Pancreas (tissue), 10 donors: ENCODE measurements at regions of chr9 and their contacts with region 1.

Region 1: DNA sequence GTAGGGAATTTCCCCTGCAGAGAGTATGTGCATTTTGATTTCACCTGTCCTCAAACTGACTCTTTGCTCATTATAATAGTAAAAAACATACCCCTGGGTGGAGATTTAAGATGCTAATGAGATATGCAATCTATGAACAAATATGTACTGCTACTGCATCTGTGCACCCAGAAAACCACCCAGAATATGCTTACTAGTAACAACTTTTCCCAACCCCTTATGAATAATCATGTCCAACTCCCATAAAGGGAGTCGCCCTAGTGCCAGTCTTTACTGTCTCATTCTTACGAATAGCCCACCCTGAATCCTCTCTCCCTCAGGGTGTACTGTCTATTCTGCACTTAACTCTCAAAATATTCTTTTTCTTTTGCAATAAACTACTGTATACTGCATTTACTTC is 39.0 kb upstream of the ZFP37 start:
- DNase-seq: no peak
- ATAC-seq: no peak
- H3K4me3 ChIP-seq: no peak overlapping the region
- H3K27ac ChIP-seq: no peak overlapping the region
- H3K4me1 ChIP-seq: no peaks in the 10 kb centered on the region
- H3K27me3 ChIP-seq: peaks cover 0 to 46% (median 2%) of the 10 kb centered on the region in 4 donors
- CTCF ChIP-seq: no peak

Region 2: GRCh38 chr9:112939418-112939817 is 156.1 kb before region 1 on chr9:
- intact Hi-C with region 1: loop called in 1 of 3 experiments (anchors 10 kb)
- DNase-seq: no peak
- ATAC-seq: no peak
- H3K4me3 ChIP-seq: no peak overlapping the region
- H3K27ac ChIP-seq: no peak overlapping the region
- H3K4me1 ChIP-seq: no peaks in the 10 kb centered on the region
- H3K27me3 ChIP-seq: no peaks in the 10 kb centered on the region
- CTCF ChIP-seq: no peak